ENCODE measurements at regions of chr18 and their contacts with region 1.

Region 1: GRCh38 chr18:48834413-48835031 is 116.2 kb downstream of the SMAD7 start:
- DNase-seq: peak; percentile 87
- ATAC-seq: peak; percentile 88
- H3K4me3 Mint-ChIP-seq: peak overlapping the region; percentile 73
- H3K27ac Mint-ChIP-seq: peak overlapping the region; percentile 92
- H3K4me1 Mint-ChIP-seq: peaks cover 73% of the 10 kb centered on the region
- H3K27me3 Mint-ChIP-seq: no peaks in the 10 kb centered on the region

Region 2: GRCh38 chr18:48800876-48801727 is 33.4 kb before region 1 on chr18:
- CTCF ChIA-PET with region 1: interaction called, 3 read pairs
- POLR2A ChIA-PET with region 1: interaction called, 3 read pairs
- intact Hi-C with region 1: loop called in 1 of 2 experiments (anchors 1 kb)
- DNase-seq: peak; percentile 49
- ATAC-seq: peak; percentile 79
- H3K4me3 Mint-ChIP-seq: no peak overlapping the region
- H3K27ac Mint-ChIP-seq: peak overlapping the region; percentile 66
- H3K4me1 Mint-ChIP-seq: peaks cover 46% of the 10 kb centered on the region
- H3K27me3 Mint-ChIP-seq: no peaks in the 10 kb centered on the region

Region 3: GRCh38 chr18:48813833-48814489 is 20.6 kb before region 1 on chr18:
- CTCF ChIA-PET with region 1: interaction called, 4 read pairs
- POLR2A ChIA-PET with region 1: interaction called, 4 read pairs
- intact Hi-C with region 1: loop called in 1 of 2 experiments (anchors 1 kb)
- DNase-seq: peak; percentile 15
- ATAC-seq: peak; percentile 40
- H3K4me3 Mint-ChIP-seq: no peak overlapping the region
- H3K27ac Mint-ChIP-seq: peak overlapping the region; percentile 72
- H3K4me1 Mint-ChIP-seq: peaks cover 41% of the 10 kb centered on the region
- H3K27me3 Mint-ChIP-seq: no peaks in the 10 kb centered on the region

Region 4: DNA sequence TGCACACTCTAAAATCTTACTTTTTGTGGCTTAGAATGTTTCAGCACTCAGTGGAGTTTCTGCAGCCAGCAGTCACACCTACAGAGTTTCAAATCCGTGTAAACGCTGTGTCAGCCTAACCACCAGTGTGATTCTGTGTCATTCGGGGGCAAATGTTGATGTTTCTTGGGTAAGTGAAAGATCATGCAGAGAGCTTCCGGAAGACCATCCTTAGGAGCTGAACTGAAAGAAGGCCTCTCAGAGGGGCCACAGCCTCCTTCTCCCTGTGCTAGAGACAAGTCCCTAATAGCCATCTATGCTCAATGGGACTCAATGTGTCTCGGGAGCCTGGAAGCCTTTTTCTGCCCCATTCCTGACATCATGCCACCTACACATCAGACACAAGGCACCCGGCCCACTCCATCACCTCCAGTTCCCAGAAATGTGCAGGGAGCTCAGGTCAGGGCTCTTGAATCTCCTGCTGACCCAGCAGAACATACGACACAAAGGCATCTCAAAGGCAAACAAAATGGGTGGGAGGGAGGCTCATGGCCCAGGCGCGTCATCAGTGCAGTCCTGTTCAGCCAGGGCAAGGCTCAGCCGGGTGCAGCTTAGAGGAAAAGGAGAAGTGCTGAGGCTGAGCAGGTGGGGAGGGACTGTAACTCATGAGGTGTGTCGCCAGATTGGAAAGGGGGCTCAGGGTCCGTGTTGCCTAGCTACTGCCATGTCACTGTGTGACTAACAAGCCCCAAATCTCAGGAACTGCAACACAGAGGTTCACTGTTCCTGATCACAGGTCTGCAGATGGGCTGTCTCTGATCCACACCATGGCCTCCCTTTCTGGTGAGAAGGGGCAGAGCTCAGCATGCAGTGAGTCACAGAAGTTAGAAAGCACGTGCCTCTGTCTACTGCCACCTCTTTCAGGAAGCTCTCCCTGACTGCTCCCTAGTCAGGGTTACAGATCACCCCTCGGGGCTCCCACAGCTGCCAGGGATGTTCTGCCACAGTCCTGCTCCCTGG is 34.2 kb after region 1 on chr18:
- CTCF ChIA-PET with region 1: interaction called, 6 read pairs
- POLR2A ChIA-PET with region 1: no interaction called
- intact Hi-C with region 1: loop called (anchors 1 kb)
- DNase-seq: peak; percentile 73
- ATAC-seq: peak; percentile 79
- H3K4me3 Mint-ChIP-seq: peak overlapping the region; percentile 35
- H3K27ac Mint-ChIP-seq: peak overlapping the region; percentile 85
- H3K4me1 Mint-ChIP-seq: peaks cover 34% of the 10 kb centered on the region
- H3K27me3 Mint-ChIP-seq: no peaks in the 10 kb centered on the region

Region 5: DNA sequence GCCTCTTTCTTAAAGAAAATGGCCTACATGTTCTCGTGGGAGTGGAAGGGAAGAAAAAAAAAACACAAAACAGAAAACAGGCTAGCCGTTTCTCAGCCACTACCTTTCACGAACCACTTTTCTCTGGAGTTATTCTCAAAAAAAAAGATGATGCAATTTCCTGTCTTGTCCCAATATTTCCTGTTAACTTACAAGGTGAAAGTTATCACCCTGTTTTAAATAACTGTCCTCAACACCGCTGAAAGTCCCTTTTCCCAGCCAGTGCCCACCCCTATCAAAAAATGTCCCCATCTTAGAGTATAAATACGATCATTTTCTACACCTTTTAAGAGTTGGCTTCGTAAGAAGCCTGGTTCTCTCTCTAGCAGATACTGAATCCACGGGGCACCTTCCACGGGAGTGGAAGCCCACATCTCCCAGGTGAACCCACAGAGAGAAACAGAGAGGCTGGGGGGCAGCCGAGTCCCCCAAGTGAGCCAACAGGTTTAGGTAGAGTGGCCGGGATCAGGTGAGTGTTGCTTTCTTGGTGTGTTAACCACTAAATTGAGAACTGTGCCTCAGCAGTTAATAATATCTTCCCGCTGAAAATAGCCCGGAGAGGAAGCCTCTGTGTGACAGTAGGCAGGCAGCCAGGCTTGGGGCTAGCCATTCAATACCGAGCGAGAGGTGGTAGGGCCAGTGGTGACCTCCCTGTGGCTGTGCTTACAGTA is 100.4 kb after region 1 on chr18:
- CTCF ChIA-PET with region 1: interaction called, 4 read pairs
- POLR2A ChIA-PET with region 1: no interaction called
- intact Hi-C with region 1: loop called in 1 of 2 experiments (anchors 1 kb)
- DNase-seq: peak; percentile 10
- ATAC-seq: no peak
- H3K4me3 Mint-ChIP-seq: peak overlapping the region; percentile 60
- H3K27ac Mint-ChIP-seq: peak overlapping the region; percentile 99
- H3K4me1 Mint-ChIP-seq: peaks cover 90% of the 10 kb centered on the region
- H3K27me3 Mint-ChIP-seq: no peaks in the 10 kb centered on the region